A673 (cell line): ENCODE measurements at regions of chr7 and their contacts with region 1.

Region 1: GRCh38 chr7:33932832-33933468 is 27.6 kb downstream of the BMPER start:
- DNase-seq: peak; percentile 92
- H3K4me3 ChIP-seq: no peak overlapping the region
- H3K27ac ChIP-seq: peak overlapping the region; percentile 13
- H3K4me1 ChIP-seq: peaks cover 18% of the 10 kb centered on the region
- H3K27me3 ChIP-seq: no peaks in the 10 kb centered on the region
- CTCF ChIP-seq: peak; percentile 97

Region 2: GRCh38 chr7:33185786-33186185 is 747.2 kb before region 1 on chr7:
- CTCF ChIA-PET with region 1: interaction called, 16 read pairs
- POLR2A ChIA-PET with region 1: no interaction called
- intact Hi-C with region 1: loop called (anchors 5 kb)
- DNase-seq: peak; percentile 67
- H3K4me3 ChIP-seq: no peak overlapping the region
- H3K27ac ChIP-seq: no peak overlapping the region
- H3K4me1 ChIP-seq: peaks cover 6% of the 10 kb centered on the region
- H3K27me3 ChIP-seq: no peaks in the 10 kb centered on the region
- CTCF ChIP-seq: peak; percentile 83

Region 3: GRCh38 chr7:33243319-33243881 is 689.5 kb before region 1 on chr7:
- CTCF ChIA-PET with region 1: interaction called, 6 read pairs
- POLR2A ChIA-PET with region 1: no interaction called
- intact Hi-C with region 1: loop called (anchors 10 kb)
- DNase-seq: peak; percentile 71
- H3K4me3 ChIP-seq: no peak overlapping the region
- H3K27ac ChIP-seq: no peak overlapping the region
- H3K4me1 ChIP-seq: no peaks in the 10 kb centered on the region
- H3K27me3 ChIP-seq: no peaks in the 10 kb centered on the region
- CTCF ChIP-seq: peak; percentile 76

Region 4: DNA sequence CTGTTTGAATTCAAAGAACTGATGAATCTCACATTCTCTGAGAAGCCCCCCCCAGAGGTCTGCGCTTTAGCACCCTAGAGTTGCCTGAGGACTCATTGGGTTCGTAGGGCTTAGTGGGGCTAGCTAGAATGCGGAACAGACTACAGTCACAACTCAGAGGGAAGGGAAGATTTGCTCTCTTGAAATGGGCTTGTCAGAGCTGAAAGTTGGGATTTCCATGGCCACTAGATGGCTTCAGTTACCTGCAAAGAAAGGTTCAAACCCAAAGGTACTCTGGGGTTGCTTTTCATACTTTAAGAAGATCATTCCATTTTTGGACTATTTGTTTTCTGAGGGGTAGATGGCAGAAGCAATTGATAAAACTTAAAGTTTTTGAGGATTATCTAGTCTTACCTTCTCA is 598.6 kb before region 1 on chr7:
- CTCF ChIA-PET with region 1: interaction called, 6 read pairs
- POLR2A ChIA-PET with region 1: no interaction called
- intact Hi-C with region 1: loop called (anchors 10 kb)
- DNase-seq: peak; percentile 39
- H3K4me3 ChIP-seq: no peak overlapping the region
- H3K27ac ChIP-seq: no peak overlapping the region
- H3K4me1 ChIP-seq: no peaks in the 10 kb centered on the region
- H3K27me3 ChIP-seq: no peaks in the 10 kb centered on the region
- CTCF ChIP-seq: peak; percentile 58

Region 5: DNA sequence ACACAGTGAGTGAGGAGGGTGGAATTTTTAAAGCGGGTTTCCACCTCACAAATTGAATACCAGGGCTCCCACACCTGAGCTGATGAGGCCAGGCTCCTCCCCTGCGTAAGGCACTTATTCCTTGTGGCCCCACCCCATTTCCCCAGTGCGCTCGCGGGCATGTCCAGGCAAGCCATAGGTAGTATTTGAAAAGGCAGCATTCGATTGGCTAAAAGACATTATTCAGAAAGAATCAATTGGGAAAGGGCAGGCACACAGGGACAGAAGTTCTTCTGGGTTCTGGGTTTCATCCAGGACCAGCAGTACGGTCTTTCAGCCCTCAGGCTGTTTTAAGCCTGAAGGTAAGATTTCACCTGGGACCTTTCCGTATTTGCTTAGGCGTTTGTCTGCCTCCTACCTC is 581.2 kb before region 1 on chr7:
- CTCF ChIA-PET with region 1: no interaction called
- POLR2A ChIA-PET with region 1: no interaction called
- intact Hi-C with region 1: no loop called
- DNase-seq: no peak
- H3K4me3 ChIP-seq: no peak overlapping the region
- H3K27ac ChIP-seq: no peak overlapping the region
- H3K4me1 ChIP-seq: no peaks in the 10 kb centered on the region
- H3K27me3 ChIP-seq: no peaks in the 10 kb centered on the region
- CTCF ChIP-seq: no peak

Region 6: DNA sequence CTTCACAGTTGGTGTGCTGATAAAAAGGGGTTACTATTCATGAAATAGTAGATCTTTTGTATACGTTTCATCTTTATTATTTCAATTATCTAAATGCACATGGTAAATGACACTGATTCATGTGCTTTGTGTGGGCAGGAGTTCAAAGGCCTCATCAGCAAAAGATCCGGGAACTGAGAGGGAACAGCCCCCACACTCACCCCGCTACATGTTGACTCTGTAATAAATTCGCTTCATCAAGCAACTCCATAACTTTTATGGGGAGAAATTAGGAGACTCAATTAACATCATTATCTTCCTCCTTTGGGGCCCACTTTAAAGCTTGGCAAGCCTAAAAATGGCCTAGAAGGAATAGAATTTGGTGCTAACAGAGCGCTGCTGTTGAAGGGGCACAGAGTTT is 278.3 kb before region 1 on chr7:
- CTCF ChIA-PET with region 1: no interaction called
- POLR2A ChIA-PET with region 1: no interaction called
- intact Hi-C with region 1: no loop called
- DNase-seq: no peak
- H3K4me3 ChIP-seq: no peak overlapping the region
- H3K27ac ChIP-seq: no peak overlapping the region
- H3K4me1 ChIP-seq: no peaks in the 10 kb centered on the region
- H3K27me3 ChIP-seq: no peaks in the 10 kb centered on the region
- CTCF ChIP-seq: no peak

Region 7: DNA sequence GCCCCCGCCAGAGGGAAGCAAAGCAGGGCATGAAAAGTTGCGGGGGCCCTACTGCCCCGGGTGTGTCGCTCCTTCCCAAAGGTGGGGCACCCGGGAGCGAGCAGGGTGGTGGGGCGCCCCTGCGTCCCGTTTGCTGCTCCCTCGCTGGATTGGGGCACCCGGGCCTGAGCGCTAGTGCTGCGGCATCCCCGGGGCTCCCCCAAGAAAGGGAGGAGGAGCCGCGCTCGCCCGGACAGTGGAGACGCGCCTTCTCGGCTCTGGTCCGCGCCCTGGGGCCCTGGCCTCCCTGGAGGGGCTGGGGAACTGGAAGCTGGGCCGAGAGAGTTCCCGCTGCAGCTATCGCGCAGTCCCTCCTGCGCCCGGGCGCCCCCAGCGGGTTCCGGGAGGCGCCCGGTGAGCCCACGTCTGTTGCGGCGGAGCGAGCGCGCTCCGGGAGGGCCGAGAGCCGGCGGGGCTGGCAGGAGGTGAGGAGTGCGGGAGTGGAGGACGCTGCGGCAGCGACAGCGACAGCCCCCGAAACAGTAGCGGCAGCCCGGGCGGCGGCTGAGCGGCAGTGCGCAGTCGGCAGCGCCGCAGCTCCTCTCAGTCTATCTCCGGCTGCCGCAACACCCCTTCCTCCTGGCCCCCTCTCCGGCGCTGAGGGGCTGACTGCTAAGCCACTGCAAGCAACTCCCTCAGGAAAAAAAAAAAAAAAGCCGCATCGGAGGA is 28.1 kb before region 1 on chr7:
- CTCF ChIA-PET with region 1: interaction called, 16 read pairs
- POLR2A ChIA-PET with region 1: no interaction called
- intact Hi-C with region 1: no loop called
- DNase-seq: peak; percentile 70
- H3K4me3 ChIP-seq: peak overlapping the region; percentile 68
- H3K27ac ChIP-seq: peak overlapping the region; percentile 67
- H3K4me1 ChIP-seq: peaks cover 12% of the 10 kb centered on the region
- H3K27me3 ChIP-seq: peaks cover 5% of the 10 kb centered on the region
- CTCF ChIP-seq: 0 out of 2 replicates have a peak, but pooled peaks have one; percentile 38